Heart right ventricle (tissue), 16 donors: ENCODE measurements at regions of chr12 and their contacts with region 1.

Region 1: GRCh38 chr12:58346032-58346632 is 404.8 kb downstream of the ATP23 start:
- DNase-seq: no peak
- ATAC-seq: peak in 1 of 8 donors; percentile 58
- H3K4me3 ChIP-seq: no peak overlapping the region
- H3K27ac ChIP-seq: no peak overlapping the region
- H3K4me1 ChIP-seq: peaks cover 0 to 14% (median 0%) of the 10 kb centered on the region in 9 donors
- H3K27me3 ChIP-seq: peaks cover 0 to 3% (median 0%) of the 10 kb centered on the region in 7 donors
- CTCF ChIP-seq: peak; percentile 73 to 91 (median 89)

Region 2: GRCh38 chr12:57983146-57983857 is 362.8 kb before region 1 on chr12:
- intact Hi-C with region 1: loop called in 5 of 10 experiments (anchors 5 to 10 kb)
- DNase-seq: peak in 1 of 2 donors; percentile 51
- ATAC-seq: no peak
- H3K4me3 ChIP-seq: no peak overlapping the region
- H3K27ac ChIP-seq: no peak overlapping the region
- H3K4me1 ChIP-seq: peaks cover 0 to 14% (median 7%) of the 10 kb centered on the region in 9 donors
- H3K27me3 ChIP-seq: peaks cover 0 to 2% (median 0%) of the 10 kb centered on the region in 7 donors
- CTCF ChIP-seq: peak; percentile 32 to 83 (median 71)

Region 3: GRCh38 chr12:58247638-58248037 is 98.5 kb before region 1 on chr12:
- intact Hi-C with region 1: no loop called
- DNase-seq: no peak
- ATAC-seq: no peak
- H3K4me3 ChIP-seq: no peak overlapping the region
- H3K27ac ChIP-seq: no peak overlapping the region
- H3K4me1 ChIP-seq: peaks cover 7 to 17% (median 13%) of the 10 kb centered on the region in 9 donors
- H3K27me3 ChIP-seq: no peaks in the 10 kb centered on the region
- CTCF ChIP-seq: no peak

Region 4: GRCh38 chr12:58310828-58311622 is 35.1 kb before region 1 on chr12:
- intact Hi-C with region 1: no loop called
- DNase-seq: no peak
- ATAC-seq: peak in 1 of 8 donors; percentile 81
- H3K4me3 ChIP-seq: no peak overlapping the region
- H3K27ac ChIP-seq: no peak overlapping the region
- H3K4me1 ChIP-seq: peaks cover 0 to 13% (median 0%) of the 10 kb centered on the region in 9 donors
- H3K27me3 ChIP-seq: no peaks in the 10 kb centered on the region
- CTCF ChIP-seq: no peak

Region 5: DNA sequence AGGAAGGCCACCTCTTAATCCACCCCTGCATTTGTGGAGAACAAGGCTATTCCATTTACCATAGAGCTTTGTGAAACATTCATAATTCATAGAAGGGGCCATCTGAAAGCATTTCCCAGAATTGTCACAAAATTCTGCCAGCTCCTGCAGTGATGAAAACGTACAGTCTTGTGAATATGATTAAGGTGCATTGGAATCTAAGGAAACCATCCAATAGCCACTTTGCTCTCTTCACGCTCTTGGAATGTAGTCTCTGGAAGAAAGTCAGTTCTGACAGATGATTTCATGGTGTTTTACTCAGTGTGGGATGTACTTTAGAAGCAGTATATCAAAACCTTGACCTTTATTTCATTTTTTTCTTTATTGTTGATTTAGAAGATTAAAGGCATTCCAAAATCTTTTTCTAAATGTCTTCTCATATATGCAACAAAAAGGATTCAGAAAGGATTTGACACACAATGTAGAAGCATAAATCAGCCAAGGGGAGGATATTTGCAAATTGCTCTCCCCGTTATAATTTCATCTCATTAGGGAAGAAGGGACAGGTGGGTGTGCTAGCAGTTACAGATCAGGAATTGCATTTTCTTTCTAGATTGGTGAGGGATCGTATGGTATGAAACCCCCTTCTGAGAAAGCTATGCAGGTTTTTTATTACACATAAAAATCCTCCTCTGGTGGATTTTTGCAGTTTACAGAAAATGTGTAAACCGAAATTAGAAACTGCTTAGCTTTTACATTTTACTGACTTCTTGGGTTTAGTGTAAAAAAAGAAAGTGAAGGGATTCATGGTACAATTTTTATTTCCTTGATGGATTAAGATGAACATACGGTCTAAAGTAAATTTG is 184.0 kb after region 1 on chr12:
- intact Hi-C with region 1: loop called in 3 of 10 experiments (anchors 5 to 10 kb)
- DNase-seq: no peak
- ATAC-seq: peak in 2 of 8 donors; percentile 22 to 46
- H3K4me3 ChIP-seq: no peak overlapping the region
- H3K27ac ChIP-seq: no peak overlapping the region
- H3K4me1 ChIP-seq: no peaks in the 10 kb centered on the region
- H3K27me3 ChIP-seq: no peaks in the 10 kb centered on the region
- CTCF ChIP-seq: no peak

Region 6: DNA sequence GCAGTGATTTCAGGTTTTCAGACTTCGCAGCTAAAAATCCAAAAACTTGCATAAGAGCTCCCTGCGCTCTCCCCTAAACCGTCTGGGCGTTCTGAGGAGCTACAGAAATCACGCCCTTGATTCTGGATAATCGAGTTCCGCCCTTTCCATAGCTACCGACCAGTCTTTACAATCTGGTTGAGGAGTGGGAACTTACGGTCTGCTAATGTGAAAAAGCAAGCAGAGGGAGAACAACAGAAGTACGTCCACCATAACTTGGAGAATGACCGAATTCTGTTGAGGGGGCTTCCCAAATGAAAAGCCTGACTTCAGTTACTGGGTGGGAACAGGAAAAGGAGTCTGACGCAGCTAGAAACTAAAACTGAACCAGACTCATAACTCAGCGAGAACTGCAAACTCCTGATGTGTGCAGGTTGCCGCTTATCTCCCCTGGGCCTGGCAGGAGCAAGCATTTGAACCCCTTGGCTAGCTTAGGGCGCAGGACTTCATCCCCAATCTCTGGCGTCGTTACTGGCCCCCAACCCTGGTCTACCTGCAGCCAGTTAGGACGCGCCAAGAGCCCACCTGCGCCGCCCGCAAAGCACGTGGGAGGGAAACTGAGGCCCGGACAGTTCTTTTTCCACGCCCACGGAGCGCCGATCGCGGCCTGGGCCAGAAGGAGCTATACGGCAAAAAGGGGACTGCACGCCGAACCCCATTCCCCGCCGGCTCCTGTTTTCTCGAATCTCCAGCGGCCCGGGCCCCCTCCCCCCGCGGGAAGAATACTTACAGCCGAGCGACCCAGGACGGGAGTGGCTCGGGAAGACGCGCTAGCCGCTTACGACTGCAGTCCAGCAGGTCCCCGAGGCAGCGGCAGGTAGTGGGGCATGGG is 573.3 kb after region 1 on chr12:
- intact Hi-C with region 1: loop called in 1 of 10 experiments (anchors 10 kb)
- DNase-seq: peak in 1 of 2 donors; percentile 26
- ATAC-seq: peak; percentile 23 to 61 (median 40)
- H3K4me3 ChIP-seq: peak overlapping the region; percentile 73 to 95 (median 90)
- H3K27ac ChIP-seq: peak overlapping the region; percentile 86 to 97 (median 93)
- H3K4me1 ChIP-seq: peaks cover 8 to 46% (median 35%) of the 10 kb centered on the region in 9 donors
- H3K27me3 ChIP-seq: peaks cover 0 to 15% (median 0%) of the 10 kb centered on the region in 7 donors
- CTCF ChIP-seq: no peak

Region 7: GRCh38 chr12:59149997-59150642 is 804.0 kb after region 1 on chr12:
- intact Hi-C with region 1: loop called in 9 of 10 experiments (anchors 1 to 10 kb)
- DNase-seq: peak in 1 of 2 donors; percentile 12
- ATAC-seq: peak; percentile 73 to 93 (median 86)
- H3K4me3 ChIP-seq: no peak overlapping the region
- H3K27ac ChIP-seq: no peak overlapping the region
- H3K4me1 ChIP-seq: peaks cover 0 to 3% (median 0%) of the 10 kb centered on the region in 9 donors
- H3K27me3 ChIP-seq: no peaks in the 10 kb centered on the region
- CTCF ChIP-seq: peak; percentile 65 to 99 (median 90)